ENCODE measurements at regions of chr10 and their contacts with region 1.

Region 1: GRCh38 chr10:14959276-14960057 is at the start of gene MEIG1:
- DNase-seq: peak; percentile 73 to 96
- H3K4me3 ChIP-seq: peak within 1 kb of the TSS; percentile 97
- H3K27ac ChIP-seq: peak within 1 kb of the TSS; percentile 97
- H3K4me1 ChIP-seq: peaks cover 11% of the 10 kb centered on the region
- H3K27me3 ChIP-seq: no peaks in the 10 kb centered on the region
- CTCF ChIP-seq: no peak
- total RNA-seq, gene MEIG1: 1.8 and 4.1 TPM in 2 replicates

Region 2: GRCh38 chr10:12960334-12960898 is 1999.1 kb before region 1 on chr10:
- CTCF ChIA-PET with region 1: no interaction called
- POLR2A ChIA-PET with region 1: no interaction called
- intact Hi-C with region 1: no loop called
- DNase-seq: no peak
- H3K4me3 ChIP-seq: no peak overlapping the region
- H3K27ac ChIP-seq: no peak overlapping the region
- H3K4me1 ChIP-seq: no peaks in the 10 kb centered on the region
- H3K27me3 ChIP-seq: peaks cover 12% of the 10 kb centered on the region; the same call in 1 of the 2 replicates
- CTCF ChIP-seq: no peak

Region 3: GRCh38 chr10:14491806-14492205 is 467.7 kb before region 1 on chr10:
- CTCF ChIA-PET with region 1: no interaction called
- POLR2A ChIA-PET with region 1: no interaction called
- intact Hi-C with region 1: loop called (anchors 10 kb)
- DNase-seq: no peak
- H3K4me3 ChIP-seq: no peak overlapping the region
- H3K27ac ChIP-seq: no peak overlapping the region
- H3K4me1 ChIP-seq: no peaks in the 10 kb centered on the region
- H3K27me3 ChIP-seq: no peaks in the 10 kb centered on the region
- CTCF ChIP-seq: no peak

Region 4: DNA sequence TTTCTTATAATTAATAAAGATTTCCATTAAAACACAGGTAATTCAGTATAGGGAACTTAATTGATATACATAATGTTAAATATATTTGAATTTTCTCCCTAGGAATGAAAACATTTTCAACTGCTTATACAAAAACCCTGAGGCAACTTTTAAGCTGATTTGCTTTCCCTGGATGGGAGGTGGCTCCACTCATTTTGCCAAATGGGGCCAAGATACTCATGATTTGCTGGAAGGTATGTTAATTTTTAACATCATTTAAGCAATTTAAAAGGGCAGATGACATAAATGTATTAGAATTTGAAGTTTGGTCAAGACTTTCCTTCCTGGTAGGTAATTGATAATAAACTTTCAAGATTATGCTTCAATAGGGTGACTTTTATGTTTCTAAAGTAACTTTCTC is 90.1 kb after region 1 on chr10:
- CTCF ChIA-PET with region 1: no interaction called
- POLR2A ChIA-PET with region 1: interaction called, 11 read pairs
- intact Hi-C with region 1: no loop called
- DNase-seq: no peak
- H3K4me3 ChIP-seq: no peak overlapping the region
- H3K27ac ChIP-seq: no peak overlapping the region
- H3K4me1 ChIP-seq: peaks cover 10% of the 10 kb centered on the region
- H3K27me3 ChIP-seq: no peaks in the 10 kb centered on the region
- CTCF ChIP-seq: no peak

Region 5: DNA sequence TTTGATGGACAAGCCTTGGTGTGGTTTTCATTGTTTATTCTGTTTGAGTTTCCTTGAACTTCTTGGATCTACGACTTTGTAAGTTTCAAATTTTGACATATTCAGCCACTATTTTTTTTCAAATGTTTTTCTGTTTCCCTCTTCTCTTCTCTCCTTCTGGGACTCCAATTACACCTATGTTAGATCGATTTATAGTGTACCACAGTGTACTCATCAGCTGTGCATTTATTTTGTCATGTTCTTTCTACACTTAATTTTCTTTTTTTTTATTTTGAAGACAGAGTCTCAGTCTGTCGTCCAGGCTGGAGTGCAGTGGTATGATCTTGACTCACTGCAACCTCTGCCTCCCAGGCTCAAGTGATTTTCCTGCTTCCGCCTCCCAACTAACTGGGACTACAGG is 100.4 kb after region 1 on chr10:
- CTCF ChIA-PET with region 1: no interaction called
- POLR2A ChIA-PET with region 1: no interaction called
- intact Hi-C with region 1: no loop called
- DNase-seq: no peak
- H3K4me3 ChIP-seq: no peak overlapping the region
- H3K27ac ChIP-seq: no peak overlapping the region
- H3K4me1 ChIP-seq: no peaks in the 10 kb centered on the region
- H3K27me3 ChIP-seq: no peaks in the 10 kb centered on the region
- CTCF ChIP-seq: no peak

Region 6: GRCh38 chr10:15168781-15169554 is 209.5 kb after region 1 on chr10:
- CTCF ChIA-PET with region 1: no interaction called
- POLR2A ChIA-PET with region 1: interaction called, 4 read pairs
- intact Hi-C with region 1: loop called (anchors 5 kb)
- DNase-seq: peak; percentile 51 to 89
- H3K4me3 ChIP-seq: peak overlapping the region; percentile 41; the same call in 1 of the 2 replicates
- H3K27ac ChIP-seq: no peak overlapping the region
- H3K4me1 ChIP-seq: no peaks in the 10 kb centered on the region
- H3K27me3 ChIP-seq: no peaks in the 10 kb centered on the region
- CTCF ChIP-seq: no peak

Region 7: GRCh38 chr10:15206526-15206925 is 247.1 kb after region 1 on chr10:
- CTCF ChIA-PET with region 1: no interaction called
- POLR2A ChIA-PET with region 1: no interaction called
- intact Hi-C with region 1: no loop called
- DNase-seq: peak in 1 of 2 experiments; percentile 41
- H3K4me3 ChIP-seq: no peak overlapping the region
- H3K27ac ChIP-seq: no peak overlapping the region
- H3K4me1 ChIP-seq: peaks cover 9% of the 10 kb centered on the region
- H3K27me3 ChIP-seq: no peaks in the 10 kb centered on the region
- CTCF ChIP-seq: no peak